AG04450 (cell line): ENCODE measurements at regions of chr19 and their contacts with region 1.

Region 1: DNA sequence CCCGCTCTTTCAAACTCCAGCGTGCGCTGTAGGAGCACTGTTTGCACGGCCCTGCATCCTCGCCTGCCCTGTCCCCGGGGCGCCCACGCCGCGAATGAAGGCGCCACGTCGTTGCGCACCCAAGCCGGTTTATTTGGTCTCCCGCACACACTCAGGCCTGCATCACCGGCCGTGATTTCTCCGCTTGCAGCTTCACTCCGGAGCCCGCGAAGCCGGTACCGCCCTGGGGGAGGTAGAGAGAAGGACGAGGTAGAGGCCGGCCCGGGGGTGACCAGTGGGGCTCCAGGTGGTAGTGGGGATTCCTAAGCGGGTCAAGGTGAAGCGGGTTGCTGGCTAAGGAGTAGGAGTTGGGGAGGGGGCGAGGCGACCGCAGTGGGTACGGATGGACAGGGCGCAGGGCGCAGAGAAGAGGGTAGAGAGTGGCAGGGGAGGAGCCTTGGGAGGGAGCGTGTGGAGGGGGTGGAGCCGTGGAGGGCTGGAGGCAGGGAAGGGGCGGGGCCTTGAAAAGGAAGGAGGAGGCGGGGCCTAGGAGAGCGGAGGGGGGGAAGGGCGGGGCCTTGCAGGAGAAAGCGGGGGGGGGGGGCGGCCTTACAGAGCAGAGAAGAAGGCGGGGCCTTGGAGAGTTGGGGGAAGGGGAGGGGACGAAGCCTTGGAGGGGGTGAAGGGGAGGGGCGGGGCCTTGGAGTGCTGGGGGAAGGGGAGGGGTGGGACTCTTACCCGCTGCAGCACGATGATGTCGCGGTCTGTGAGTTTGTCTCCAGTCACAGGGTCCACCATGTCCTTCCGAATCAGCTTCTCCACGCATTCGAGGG is 24.6 kb downstream of the NOSIP start:
- DNase-seq: no peak
- H3K4me3 ChIP-seq: no peak overlapping the region
- H3K27ac ChIP-seq: no peak overlapping the region
- H3K27me3 ChIP-seq: no peaks in the 10 kb centered on the region
- CTCF ChIP-seq: no peak

Region 2: DNA sequence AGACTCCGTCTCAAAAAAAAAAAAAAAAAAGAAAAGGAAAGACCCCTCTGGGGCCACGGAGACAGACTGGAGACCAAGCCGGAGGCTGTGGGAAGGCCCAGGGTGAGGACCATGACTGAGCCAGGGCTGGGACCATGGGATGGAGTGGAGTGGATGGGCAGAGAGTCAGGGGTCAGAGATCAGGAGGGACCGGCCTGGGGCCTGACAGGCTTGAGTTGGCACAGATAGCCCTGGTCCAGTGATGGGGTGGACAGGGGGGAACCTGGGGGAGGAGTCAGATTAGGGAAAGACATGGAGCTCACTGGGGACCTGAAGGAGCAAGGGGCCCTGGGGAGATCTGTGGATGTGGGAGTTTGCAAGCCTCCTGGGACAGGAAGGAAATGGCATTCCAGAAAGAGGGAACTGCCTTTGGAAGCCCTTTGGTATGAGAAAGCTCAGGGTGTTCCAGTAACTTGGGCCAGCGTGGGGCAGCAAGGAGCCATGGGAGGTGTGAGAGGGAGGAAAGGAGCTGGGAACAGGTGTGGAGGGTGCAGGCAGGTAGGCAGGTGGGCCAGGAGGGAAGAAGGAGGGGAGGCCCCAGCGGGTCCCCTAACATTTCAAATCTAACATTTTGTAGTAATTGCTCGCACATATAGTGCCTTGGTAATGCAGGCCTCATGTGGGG is 74.7 kb before region 1 on chr19:
- CTCF ChIA-PET with region 1: no interaction called
- POLR2A ChIA-PET with region 1: no interaction called
- DNase-seq: no peak
- H3K4me3 ChIP-seq: no peak overlapping the region
- H3K27ac ChIP-seq: no peak overlapping the region
- H3K27me3 ChIP-seq: no peaks in the 10 kb centered on the region
- CTCF ChIP-seq: no peak

Region 3: DNA sequence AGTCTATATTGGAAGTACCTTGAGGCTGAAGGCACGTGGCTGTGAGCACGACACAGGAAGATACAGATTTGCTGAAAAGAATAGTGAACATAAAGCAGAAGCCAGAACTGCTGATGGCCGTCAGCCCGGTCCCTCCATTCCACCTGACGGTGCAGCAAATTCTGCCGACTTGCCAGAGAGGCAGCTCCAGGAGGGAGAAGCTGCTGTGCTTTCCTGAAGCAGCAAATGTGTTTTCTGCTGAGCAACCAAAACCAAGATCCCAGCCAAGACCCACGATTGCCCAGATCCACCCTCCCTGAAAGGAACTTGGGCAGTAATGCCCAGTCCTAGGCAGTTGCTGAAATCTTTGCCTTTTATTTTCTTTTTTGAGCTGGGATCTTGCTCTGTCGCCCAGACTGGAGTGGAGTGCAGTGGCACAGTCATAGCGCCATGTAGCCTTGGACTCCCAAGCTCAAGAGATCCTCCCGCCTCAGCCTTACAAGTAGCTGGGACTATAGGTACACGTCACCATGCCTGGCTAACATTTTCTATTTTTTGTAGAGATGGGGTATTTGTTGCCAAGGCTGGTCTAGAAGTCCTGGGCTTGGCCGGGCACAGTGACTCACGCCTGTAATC is 35.0 kb before region 1 on chr19:
- CTCF ChIA-PET with region 1: no interaction called
- POLR2A ChIA-PET with region 1: no interaction called
- DNase-seq: no peak
- H3K4me3 ChIP-seq: no peak overlapping the region
- H3K27ac ChIP-seq: no peak overlapping the region
- H3K27me3 ChIP-seq: no peaks in the 10 kb centered on the region
- CTCF ChIP-seq: no peak

Region 4: GRCh38 chr19:49590071-49590970 is 34.5 kb after region 1 on chr19:
- CTCF ChIA-PET with region 1: no interaction called
- POLR2A ChIA-PET with region 1: interaction called, 10 read pairs
- DNase-seq: peak; percentile 88
- H3K4me3 ChIP-seq: peak overlapping the region; percentile 78
- H3K27ac ChIP-seq: peak overlapping the region; percentile 68
- H3K27me3 ChIP-seq: no peaks in the 10 kb centered on the region
- CTCF ChIP-seq: 0 out of 2 replicates have a peak, but pooled peaks have one; percentile 3

Region 5: DNA sequence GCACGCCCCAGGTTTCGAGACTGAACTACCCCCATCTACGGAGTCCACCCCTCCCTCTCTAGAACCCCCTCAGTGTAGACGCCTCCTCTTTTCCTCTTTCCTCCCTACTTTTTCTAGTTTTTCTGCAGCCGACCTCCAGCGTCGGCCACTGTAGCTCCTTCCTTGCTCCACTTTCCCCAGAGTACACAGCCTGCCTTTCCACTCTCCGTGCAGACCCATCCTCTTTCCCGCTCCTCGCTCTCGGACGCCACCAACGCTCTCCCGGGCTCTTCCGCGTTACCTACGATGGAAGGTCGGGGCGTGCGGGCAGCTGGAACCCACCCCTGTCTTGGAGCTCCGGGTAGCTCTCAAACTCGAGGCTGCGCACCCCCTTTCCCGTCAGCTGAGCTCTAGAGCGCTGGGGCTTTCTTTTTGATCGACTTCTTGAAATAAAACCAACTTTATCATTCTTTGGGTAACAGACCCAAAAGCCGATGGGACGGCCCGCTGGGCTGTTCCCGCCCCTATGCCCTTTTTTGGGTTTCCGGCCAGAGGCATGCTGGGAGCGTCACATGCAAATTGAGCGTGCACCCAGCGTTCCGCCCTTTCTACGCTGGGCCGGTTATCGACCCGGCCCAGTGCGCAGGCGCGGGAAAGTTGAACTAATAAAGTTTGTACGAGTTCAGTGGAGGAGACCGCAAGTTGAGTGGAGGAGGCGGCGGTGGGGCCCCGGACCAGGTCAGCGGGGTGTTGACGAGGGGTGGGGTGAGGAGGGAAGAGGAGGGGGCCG is 109.7 kb after region 1 on chr19 and contains the starts of genes BCL2L12 and IRF3:
- CTCF ChIA-PET with region 1: no interaction called
- POLR2A ChIA-PET with region 1: no interaction called
- DNase-seq: peak; percentile 91
- H3K4me3 ChIP-seq: peak within 1 kb of the TSS; percentile 93
- H3K27ac ChIP-seq: peak within 1 kb of the TSS; percentile 75
- H3K27me3 ChIP-seq: no peaks in the 10 kb centered on the region
- CTCF ChIP-seq: no peak
- polyA plus RNA-seq, gene BCL2L12: 8.8 and 10.9 TPM in 2 replicates
- polyA plus RNA-seq, gene IRF3: 33.5 and 54.9 TPM in 2 replicates

Region 6: GRCh38 chr19:49690656-49691242 is 134.9 kb after region 1 on chr19 and contains the start of gene CPT1C:
- CTCF ChIA-PET with region 1: no interaction called
- POLR2A ChIA-PET with region 1: no interaction called
- DNase-seq: peak; percentile 61
- H3K4me3 ChIP-seq: peak within 1 kb of the TSS; percentile 73
- H3K27ac ChIP-seq: peak within 1 kb of the TSS; percentile 70
- H3K27me3 ChIP-seq: no peaks in the 10 kb centered on the region
- CTCF ChIP-seq: no peak
- polyA plus RNA-seq, gene CPT1C: 20.3 and 24.2 TPM in 2 replicates